ENCODE measurements at regions of chr13 and their contacts with region 1.

Region 1: DNA sequence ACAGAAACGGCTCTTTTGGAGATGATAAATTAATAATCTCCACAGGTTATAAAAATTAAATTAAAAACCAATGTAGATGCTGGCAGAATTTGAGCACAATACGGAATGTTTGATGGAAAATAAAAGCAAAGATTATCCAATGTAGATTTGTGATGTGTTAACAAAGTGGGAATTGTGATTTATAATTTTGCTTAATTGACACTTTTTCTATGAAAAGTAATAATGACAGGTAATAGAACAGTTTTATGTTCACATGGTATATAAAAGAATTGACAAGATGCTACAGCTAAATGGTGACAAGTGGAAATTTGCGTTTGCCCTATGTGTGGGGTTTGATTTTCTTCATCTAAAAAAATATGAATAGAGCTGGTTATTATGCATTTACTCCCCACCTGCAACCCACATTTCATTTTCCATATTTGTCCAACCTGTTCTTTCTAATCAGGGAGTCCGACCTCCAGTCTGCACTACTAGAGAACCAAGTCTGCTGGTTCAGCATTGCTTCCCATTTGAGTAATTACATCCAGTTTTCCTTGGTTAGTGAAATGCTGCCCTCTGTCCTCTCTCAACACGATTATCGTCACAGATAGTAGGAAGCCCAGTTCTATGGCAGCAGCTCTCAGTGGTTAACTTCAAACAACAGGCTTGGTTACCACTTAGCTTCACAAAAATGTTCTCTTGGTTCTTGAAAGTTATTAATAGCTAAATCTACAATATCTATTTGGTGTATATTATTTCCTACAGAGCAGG is 61.4 kb upstream of the SLITRK1 start:
- DNase-seq: no peak
- H3K4me3 ChIP-seq: no peak overlapping the region
- H3K27ac ChIP-seq: no peak overlapping the region
- H3K4me1 ChIP-seq: peaks cover 30% of the 10 kb centered on the region
- H3K27me3 ChIP-seq: no peaks in the 10 kb centered on the region
- CTCF ChIP-seq: no peak

Region 2: DNA sequence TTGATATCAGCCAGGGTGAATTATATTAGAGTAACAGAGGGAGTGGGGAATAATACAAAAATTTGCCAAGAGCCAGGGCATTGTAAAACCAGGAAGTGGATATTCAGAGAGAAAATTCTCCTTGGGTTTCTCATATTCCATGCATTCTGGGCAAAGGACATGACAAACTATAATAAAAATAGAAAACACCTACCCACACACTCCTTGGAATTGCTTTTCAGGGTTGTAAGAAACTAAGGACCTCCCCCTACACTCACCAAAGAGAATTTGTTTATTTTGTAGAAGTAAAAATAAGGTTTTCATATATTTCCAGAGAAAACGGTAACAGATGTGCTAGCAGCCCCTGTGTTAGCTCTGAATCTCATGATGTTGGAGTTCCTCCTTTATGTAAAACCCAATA is 711.1 kb before region 1 on chr13:
- CTCF ChIA-PET with region 1: no interaction called
- dilution Hi-C with region 1: no loop called
- in situ Hi-C with region 1: no loop called
- intact Hi-C with region 1: no loop called
- DNase-seq: no peak
- H3K4me3 ChIP-seq: no peak overlapping the region
- H3K27ac ChIP-seq: no peak overlapping the region
- H3K4me1 ChIP-seq: no peaks in the 10 kb centered on the region
- H3K27me3 ChIP-seq: no peaks in the 10 kb centered on the region
- CTCF ChIP-seq: no peak

Region 3: DNA sequence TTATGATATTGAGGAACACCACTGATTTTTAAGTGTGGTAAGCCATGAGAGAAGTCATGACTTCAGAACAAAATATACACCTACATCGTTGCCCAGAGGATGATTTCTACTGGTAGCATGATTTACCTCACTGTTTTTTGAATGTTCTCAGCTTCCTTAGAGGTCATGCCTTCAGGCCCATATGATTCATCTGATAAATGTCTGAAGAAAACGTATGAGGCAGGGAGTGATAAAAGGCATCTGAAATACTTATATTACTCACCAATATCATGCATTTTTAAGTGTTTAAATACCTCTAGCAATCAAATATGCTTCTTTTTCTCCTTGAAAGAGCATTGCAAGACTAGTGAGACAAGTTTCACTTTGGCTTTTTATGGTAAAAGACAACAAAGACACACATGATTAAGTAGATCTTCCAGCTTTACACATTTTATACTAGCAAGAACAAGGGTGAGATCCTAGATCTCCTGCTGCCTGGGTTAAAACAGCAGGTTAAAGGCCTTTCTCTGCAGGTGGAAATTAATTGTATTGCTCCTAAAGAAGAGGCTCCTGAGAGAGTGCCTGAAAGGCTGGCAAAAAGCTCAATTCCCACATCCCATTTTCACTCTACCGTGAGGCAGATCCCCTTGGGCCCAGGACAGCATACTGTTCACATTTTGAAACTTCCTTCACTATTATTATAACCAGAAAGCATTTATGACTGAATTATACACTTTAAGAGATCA is 493.9 kb before region 1 on chr13:
- CTCF ChIA-PET with region 1: no interaction called
- dilution Hi-C with region 1: no loop called
- in situ Hi-C with region 1: no loop called
- intact Hi-C with region 1: loop called (anchors 5 kb)
- DNase-seq: peak; percentile 81
- H3K4me3 ChIP-seq: no peak overlapping the region
- H3K27ac ChIP-seq: peak overlapping the region; percentile 48
- H3K4me1 ChIP-seq: peaks cover 19% of the 10 kb centered on the region
- H3K27me3 ChIP-seq: no peaks in the 10 kb centered on the region
- CTCF ChIP-seq: no peak

Measured in mammary epithelial cell (primary cell).